Dendritic cell treated with granulocyte-macrophage colony-stimulating factor and Interleukin-4, amounts not matched to agents 40 ng/mL and 50 ng/mL, for 4 days (primary cell): ENCODE measurements at regions of chr11 and their contacts with region 1.

Region 1: DNA sequence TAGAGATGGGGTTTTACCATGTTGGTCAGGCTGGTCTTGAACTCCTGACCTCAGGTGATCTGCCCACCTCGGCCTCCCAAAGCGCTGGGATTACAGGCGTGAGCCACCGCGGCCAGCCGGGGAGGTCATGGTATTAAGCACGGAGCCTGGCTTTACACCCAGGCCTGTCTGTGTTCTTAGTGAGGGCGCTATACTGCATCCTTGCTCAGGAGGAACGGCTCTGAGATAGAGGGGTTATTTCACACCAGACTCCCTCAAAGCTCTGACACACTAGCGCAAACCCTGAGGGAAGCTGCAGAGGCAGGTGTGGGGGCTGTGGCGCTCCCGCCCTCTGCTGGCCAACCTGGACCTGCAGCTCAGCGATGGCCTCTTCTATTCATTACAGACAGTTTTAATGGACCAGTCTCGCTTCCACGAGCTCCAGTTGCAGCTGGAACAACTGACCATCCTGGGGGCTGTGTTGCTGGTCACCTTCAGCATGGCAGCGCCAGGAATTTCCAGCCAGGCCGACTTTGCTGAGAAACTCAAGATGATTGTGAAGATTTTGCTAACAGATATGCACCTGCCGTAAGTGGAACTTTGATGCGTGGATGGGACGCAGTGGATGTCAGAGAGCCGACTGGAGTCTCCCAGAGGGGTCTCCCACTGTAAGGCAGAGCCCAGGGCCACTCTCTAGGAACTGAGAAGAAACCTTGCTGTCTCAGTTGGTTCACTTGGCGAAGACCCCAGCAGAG is 26.2 kb downstream of the TCP11L1 start:
- H3K4me3 Mint-ChIP-seq: no peak overlapping the region
- H3K27ac Mint-ChIP-seq: no peak overlapping the region
- H3K4me1 Mint-ChIP-seq: peaks cover 40% of the 10 kb centered on the region
- H3K27me3 Mint-ChIP-seq: no peaks in the 10 kb centered on the region

Region 2: DNA sequence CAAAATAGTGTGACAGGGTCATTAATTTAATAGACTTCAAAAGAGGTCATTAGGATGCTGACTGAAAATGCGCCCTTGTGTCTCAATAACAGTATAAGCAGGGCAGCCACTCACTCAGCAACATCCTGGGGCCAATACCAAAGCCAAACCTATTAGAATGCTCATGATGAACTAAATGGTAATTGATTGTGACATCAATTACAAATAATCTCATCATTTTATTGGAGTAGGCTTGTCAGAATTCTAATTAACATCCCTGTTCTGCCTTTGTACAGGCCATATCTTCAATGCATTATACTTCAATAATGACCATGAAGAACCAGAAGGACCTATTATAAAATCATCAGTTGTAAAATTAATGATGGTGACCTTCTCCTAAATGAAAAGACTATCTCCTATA is 1631.8 kb before region 1 on chr11:
- intact Hi-C with region 1: no loop called
- H3K4me3 Mint-ChIP-seq: no peak overlapping the region
- H3K27ac Mint-ChIP-seq: no peak overlapping the region
- H3K4me1 Mint-ChIP-seq: no peaks in the 10 kb centered on the region
- H3K27me3 Mint-ChIP-seq: no peaks in the 10 kb centered on the region

Region 3: GRCh38 chr11:32847511-32847910 is 218.1 kb before region 1 on chr11:
- intact Hi-C with region 1: loop called (anchors 10 kb)
- H3K4me3 Mint-ChIP-seq: no peak overlapping the region
- H3K27ac Mint-ChIP-seq: peak overlapping the region; percentile 64
- H3K4me1 Mint-ChIP-seq: peaks cover 60% of the 10 kb centered on the region
- H3K27me3 Mint-ChIP-seq: no peaks in the 10 kb centered on the region

Region 4: DNA sequence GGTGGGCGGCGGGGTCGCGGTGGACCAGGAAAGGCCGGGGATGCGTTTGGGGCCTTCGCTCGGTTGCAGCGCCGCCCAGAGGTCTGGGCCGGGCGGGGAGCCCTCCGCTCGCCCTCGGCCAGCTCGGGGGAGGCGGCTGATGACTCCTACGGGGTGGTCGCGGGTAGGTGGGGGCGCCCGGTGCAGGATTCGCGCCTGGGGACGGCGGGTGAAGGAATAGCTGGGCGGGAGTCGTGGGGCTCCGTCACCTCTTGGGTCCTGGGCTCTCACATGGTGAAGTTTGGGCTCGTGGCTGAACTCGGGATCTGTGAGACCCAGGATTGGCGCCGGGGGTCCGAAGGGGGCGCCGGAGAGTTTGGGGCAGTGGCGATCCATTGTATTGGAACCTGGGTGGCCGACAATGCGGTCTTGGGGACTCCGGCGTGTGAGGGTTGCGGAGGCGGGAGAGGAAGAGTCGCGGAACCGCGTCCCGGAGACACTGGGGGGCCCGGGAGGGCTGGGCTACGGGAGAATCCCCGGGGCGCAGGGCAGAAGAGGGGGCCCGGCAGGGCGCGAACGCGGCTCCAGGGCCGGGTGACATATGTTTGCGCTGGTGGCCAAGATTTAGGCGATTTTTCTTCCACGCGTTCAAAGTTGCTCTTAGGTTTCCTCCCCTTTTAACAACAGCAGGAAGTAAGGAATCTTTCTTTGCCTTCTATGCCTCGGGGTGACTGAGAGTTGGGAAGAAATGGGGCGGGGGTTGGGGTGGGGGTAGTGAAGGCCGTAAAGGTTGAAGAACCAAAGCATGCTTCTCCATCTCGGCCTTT is 172.1 kb before region 1 on chr11:
- intact Hi-C with region 1: loop called (anchors 5 kb)
- H3K4me3 Mint-ChIP-seq: peak overlapping the region; percentile 92
- H3K27ac Mint-ChIP-seq: peak overlapping the region; percentile 88
- H3K4me1 Mint-ChIP-seq: peaks cover 21% of the 10 kb centered on the region
- H3K27me3 Mint-ChIP-seq: peaks cover 3% of the 10 kb centered on the region

Region 5: DNA sequence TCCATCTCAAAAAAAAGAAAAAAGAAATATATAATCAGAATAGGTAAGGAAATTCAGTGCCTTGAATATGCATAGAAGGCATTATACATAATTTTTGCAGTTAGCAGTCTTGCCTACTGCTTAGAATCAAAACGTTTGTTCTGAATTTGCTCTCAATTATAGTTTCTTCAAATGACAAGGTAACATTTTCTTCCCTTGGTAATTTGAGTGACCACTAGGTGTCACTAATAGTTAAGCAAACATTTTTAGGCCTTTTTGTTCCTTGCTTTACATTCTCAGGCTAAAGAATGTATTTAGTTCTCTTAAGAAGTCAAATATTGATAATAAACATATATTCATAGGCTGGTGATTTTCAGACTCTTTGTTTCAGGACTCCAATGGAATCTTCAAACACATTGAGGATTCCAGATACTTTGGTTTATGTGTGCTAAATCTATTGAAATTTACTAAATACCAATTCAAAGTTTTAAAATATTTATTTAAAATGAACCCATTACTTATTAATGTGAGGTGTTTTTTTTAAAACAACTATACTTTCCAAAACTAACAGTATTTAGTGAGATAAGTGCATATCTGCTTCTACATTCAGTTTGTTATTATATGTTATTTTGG is 105.0 kb before region 1 on chr11:
- intact Hi-C with region 1: loop called (anchors 1 kb)
- H3K4me3 Mint-ChIP-seq: no peak overlapping the region
- H3K27ac Mint-ChIP-seq: no peak overlapping the region
- H3K4me1 Mint-ChIP-seq: peaks cover 5% of the 10 kb centered on the region
- H3K27me3 Mint-ChIP-seq: no peaks in the 10 kb centered on the region

Region 6: GRCh38 chr11:33015621-33016551 is 49.7 kb before region 1 on chr11 and contains the start of gene DEPDC7:
- intact Hi-C with region 1: loop called (anchors 5 kb)
- H3K4me3 Mint-ChIP-seq: peak within 1 kb of the TSS; percentile 84
- H3K27ac Mint-ChIP-seq: peak within 1 kb of the TSS; percentile 79
- H3K4me1 Mint-ChIP-seq: peaks cover 20% of the 10 kb centered on the region
- H3K27me3 Mint-ChIP-seq: peaks cover 6% of the 10 kb centered on the region